ENCODE measurements at regions of chr17 and their contacts with region 1.

Region 1: DNA sequence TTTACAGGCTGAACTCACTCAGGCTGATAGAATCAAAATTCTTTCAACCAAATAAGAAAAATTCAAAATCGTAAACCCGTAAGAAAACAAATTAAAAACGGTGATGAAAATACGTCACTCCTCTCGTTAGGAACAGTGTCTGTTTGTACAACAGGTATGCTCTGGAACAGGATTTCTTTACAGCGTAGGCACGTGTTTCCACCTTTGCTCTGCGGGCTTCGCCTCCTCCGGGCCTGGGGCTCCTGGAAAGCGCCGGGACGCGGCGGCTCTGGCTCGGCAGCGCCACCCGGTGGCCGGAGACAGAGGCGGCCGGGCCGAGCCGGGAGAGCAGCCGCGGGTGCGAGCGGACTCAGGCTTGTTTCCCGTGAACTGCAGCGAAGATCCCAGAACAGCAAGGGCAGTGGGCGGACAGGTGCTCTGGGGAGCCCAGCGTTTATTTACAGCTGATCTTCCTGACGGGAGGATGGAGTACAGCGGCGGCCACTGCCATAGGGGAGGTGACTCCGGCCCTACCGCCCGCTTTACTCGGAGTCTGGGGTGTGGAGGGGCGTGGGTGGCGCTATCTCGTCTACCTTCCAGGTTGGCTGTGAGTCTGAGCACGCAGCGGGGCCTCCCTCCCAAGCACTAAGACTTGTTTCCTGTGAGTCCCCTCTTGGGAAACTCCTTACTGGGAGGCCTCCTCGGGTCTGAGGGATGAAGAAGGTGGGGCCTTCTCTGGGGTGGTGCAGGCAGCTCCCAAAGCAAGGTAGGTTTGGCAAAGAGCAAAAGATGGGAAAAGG is 40.5 kb upstream of the ATP2A3 start:
- DNase-seq: peak in 2 of 3 donors; percentile 78 to 83
- ATAC-seq: peak; percentile 59 to 62
- H3K4me3 ChIP-seq: no peak overlapping the region
- H3K27ac ChIP-seq: no peak overlapping the region
- H3K4me1 ChIP-seq: no peaks in the 10 kb centered on the region
- H3K27me3 ChIP-seq: no peaks in the 10 kb centered on the region

Region 2: GRCh38 chr17:3738562-3739295 is 266.0 kb before region 1 on chr17:
- intact Hi-C with region 1: loop called in 1 of 4 experiments (anchors 5 kb)
- DNase-seq: peak in 2 of 3 donors; percentile 57 to 64
- ATAC-seq: peak; percentile 58 to 66
- H3K4me3 ChIP-seq: no peak overlapping the region
- H3K27ac ChIP-seq: no peak overlapping the region
- H3K4me1 ChIP-seq: no peaks in the 10 kb centered on the region
- H3K27me3 ChIP-seq: no peaks in the 10 kb centered on the region

Region 3: GRCh38 chr17:3859940-3860339 is 144.8 kb before region 1 on chr17:
- intact Hi-C with region 1: loop called (anchors 2 to 10 kb)
- DNase-seq: peak in 1 of 3 donors; percentile 59
- ATAC-seq: no peak
- H3K4me3 ChIP-seq: no peak overlapping the region
- H3K27ac ChIP-seq: no peak overlapping the region
- H3K4me1 ChIP-seq: no peaks in the 10 kb centered on the region
- H3K27me3 ChIP-seq: no peaks in the 10 kb centered on the region

Region 4: DNA sequence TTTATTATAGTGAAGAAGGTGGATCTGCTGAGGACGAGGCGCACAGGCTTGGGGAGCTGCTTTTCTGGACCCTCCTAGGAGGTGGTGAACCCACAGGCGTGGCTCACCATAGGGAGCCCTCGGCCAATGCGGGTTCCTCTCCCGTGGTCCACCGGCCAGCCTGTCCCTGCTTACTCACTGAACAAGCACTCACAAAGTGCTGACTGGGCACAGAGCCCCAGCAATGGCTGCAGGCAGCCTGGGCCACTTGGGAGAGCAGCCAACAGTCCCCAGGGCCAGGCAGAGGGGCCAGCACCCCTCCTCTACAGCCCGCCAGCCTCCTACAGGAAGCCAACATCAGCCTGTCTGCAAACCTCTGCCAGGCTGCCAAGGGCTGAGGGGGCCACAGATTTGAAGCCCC is 139.5 kb before region 1 on chr17:
- intact Hi-C with region 1: loop called (anchors 2 to 10 kb)
- DNase-seq: peak; percentile 71 to 78 (median 71)
- ATAC-seq: peak; percentile 61 to 68
- H3K4me3 ChIP-seq: no peak overlapping the region
- H3K27ac ChIP-seq: no peak overlapping the region
- H3K4me1 ChIP-seq: no peaks in the 10 kb centered on the region
- H3K27me3 ChIP-seq: no peaks in the 10 kb centered on the region

Region 5: DNA sequence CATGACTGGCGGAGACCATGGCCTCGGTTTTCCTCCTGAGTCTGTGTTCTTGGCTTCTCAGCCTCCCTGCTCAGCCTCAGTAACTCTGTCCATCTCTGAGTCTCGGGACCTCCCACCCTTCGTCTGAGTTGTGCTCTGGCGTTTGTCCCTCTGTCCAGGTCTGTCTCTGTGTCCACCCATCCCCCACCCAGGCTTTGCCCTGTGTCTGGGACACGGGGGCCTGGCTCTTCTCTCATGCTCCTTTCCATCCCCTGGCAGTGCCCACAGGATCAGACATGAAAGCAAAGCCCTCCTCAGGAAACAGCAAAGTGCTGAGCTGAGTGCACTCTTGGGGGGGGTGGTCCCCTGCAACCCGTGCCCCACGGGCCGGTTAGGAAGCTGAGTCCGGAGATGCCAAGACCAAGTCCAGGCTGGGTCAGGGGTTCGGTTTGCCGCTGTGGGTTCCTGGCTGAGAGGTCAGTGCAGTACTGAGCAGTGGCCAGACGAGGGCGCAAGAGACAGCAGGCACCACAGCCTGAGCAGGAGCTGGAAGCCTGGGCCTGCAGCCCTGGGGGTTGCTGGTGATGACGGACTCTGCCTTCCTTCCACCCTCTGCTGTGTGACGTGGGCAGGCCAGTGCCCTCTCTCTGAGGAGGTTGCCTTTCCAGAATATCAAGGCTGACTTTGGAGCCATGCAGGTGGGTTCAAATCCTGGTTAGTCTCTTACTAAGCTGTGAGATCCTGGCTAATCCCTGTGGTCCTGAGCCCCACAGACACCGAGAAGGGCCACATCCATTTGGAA is 91.0 kb before region 1 on chr17:
- intact Hi-C with region 1: loop called in 2 of 4 experiments (anchors 5 kb)
- DNase-seq: peak; percentile 80 to 93 (median 92)
- ATAC-seq: peak; percentile 63 to 65
- H3K4me3 ChIP-seq: no peak overlapping the region
- H3K27ac ChIP-seq: no peak overlapping the region
- H3K4me1 ChIP-seq: peaks cover 14% of the 10 kb centered on the region
- H3K27me3 ChIP-seq: no peaks in the 10 kb centered on the region

Region 6: GRCh38 chr17:3935140-3935542 is 69.6 kb before region 1 on chr17:
- intact Hi-C with region 1: loop called (anchors 2 to 10 kb)
- DNase-seq: peak; percentile 70 to 89 (median 87)
- ATAC-seq: peak; percentile 89 to 93
- H3K4me3 ChIP-seq: no peak overlapping the region
- H3K27ac ChIP-seq: no peak overlapping the region
- H3K4me1 ChIP-seq: no peaks in the 10 kb centered on the region
- H3K27me3 ChIP-seq: no peaks in the 10 kb centered on the region

Region 7: GRCh38 chr17:3965118-3965803 is 39.4 kb before region 1 on chr17:
- intact Hi-C with region 1: no loop called
- DNase-seq: peak; percentile 72 to 86 (median 84)
- ATAC-seq: peak; percentile 80 to 81
- H3K4me3 ChIP-seq: peak overlapping the region; percentile 55
- H3K27ac ChIP-seq: no peak overlapping the region
- H3K4me1 ChIP-seq: peaks cover 3% of the 10 kb centered on the region
- H3K27me3 ChIP-seq: no peaks in the 10 kb centered on the region

Measured in right cardiac atrium (tissue), 5 donors.